Endothelial cell of umbilical vein (primary cell): ENCODE measurements at regions of chr12 and their contacts with region 1.

Region 1: GRCh38 chr12:98998697-98999299 is 353.7 kb downstream of the APAF1 start:
- DNase-seq: peak; percentile 49
- H3K4me3 ChIP-seq: no peak overlapping the region
- H3K27ac ChIP-seq: no peak overlapping the region
- H3K4me1 ChIP-seq: no peaks in the 10 kb centered on the region
- H3K27me3 ChIP-seq: peaks cover 0 to 2% of the 10 kb centered on the region in 2 experiments
- CTCF ChIP-seq: peak; percentile 37 to 45
- POLR2A ChIP-seq: no peak

Region 2: GRCh38 chr12:98483621-98484503 is 514.9 kb before region 1 on chr12:
- CTCF ChIA-PET with region 1: no interaction called
- POLR2A ChIA-PET with region 1: no interaction called
- dilution Hi-C with region 1: no loop called
- intact Hi-C with region 1: no loop called
- DNase-seq: no peak
- H3K4me3 ChIP-seq: no peak overlapping the region
- H3K27ac ChIP-seq: no peak overlapping the region
- H3K4me1 ChIP-seq: no peaks in the 10 kb centered on the region
- H3K27me3 ChIP-seq: no peaks in the 10 kb centered on the region
- CTCF ChIP-seq: no peak
- POLR2A ChIP-seq: no peak

Region 3: GRCh38 chr12:98544751-98545150 is 454.0 kb before region 1 on chr12:
- CTCF ChIA-PET with region 1: no interaction called
- POLR2A ChIA-PET with region 1: no interaction called
- dilution Hi-C with region 1: no loop called
- intact Hi-C with region 1: no loop called
- DNase-seq: no peak
- H3K4me3 ChIP-seq: no peak overlapping the region
- H3K27ac ChIP-seq: no peak overlapping the region
- H3K4me1 ChIP-seq: no peaks in the 10 kb centered on the region
- H3K27me3 ChIP-seq: no peaks in the 10 kb centered on the region
- CTCF ChIP-seq: no peak
- POLR2A ChIP-seq: no peak

Region 4: GRCh38 chr12:98561846-98562245 is 437.0 kb before region 1 on chr12:
- CTCF ChIA-PET with region 1: interaction called, 56 read pairs
- POLR2A ChIA-PET with region 1: no interaction called
- dilution Hi-C with region 1: no loop called
- intact Hi-C with region 1: loop called (anchors 1 kb)
- DNase-seq: no peak
- H3K4me3 ChIP-seq: no peak overlapping the region
- H3K27ac ChIP-seq: no peak overlapping the region
- H3K4me1 ChIP-seq: no peaks in the 10 kb centered on the region
- H3K27me3 ChIP-seq: no peaks in the 10 kb centered on the region
- CTCF ChIP-seq: no peak
- POLR2A ChIP-seq: no peak

Region 5: GRCh38 chr12:98698603-98699463 is 300.0 kb before region 1 on chr12:
- CTCF ChIA-PET with region 1: interaction called, 68 read pairs
- POLR2A ChIA-PET with region 1: no interaction called
- dilution Hi-C with region 1: no loop called
- intact Hi-C with region 1: loop called (anchors 1 kb)
- DNase-seq: peak; percentile 74
- H3K4me3 ChIP-seq: no peak overlapping the region
- H3K27ac ChIP-seq: no peak overlapping the region
- H3K4me1 ChIP-seq: peaks cover 2% of the 10 kb centered on the region
- H3K27me3 ChIP-seq: no peaks in the 10 kb centered on the region
- CTCF ChIP-seq: peak; percentile 44 to 71
- POLR2A ChIP-seq: no peak

Region 6: DNA sequence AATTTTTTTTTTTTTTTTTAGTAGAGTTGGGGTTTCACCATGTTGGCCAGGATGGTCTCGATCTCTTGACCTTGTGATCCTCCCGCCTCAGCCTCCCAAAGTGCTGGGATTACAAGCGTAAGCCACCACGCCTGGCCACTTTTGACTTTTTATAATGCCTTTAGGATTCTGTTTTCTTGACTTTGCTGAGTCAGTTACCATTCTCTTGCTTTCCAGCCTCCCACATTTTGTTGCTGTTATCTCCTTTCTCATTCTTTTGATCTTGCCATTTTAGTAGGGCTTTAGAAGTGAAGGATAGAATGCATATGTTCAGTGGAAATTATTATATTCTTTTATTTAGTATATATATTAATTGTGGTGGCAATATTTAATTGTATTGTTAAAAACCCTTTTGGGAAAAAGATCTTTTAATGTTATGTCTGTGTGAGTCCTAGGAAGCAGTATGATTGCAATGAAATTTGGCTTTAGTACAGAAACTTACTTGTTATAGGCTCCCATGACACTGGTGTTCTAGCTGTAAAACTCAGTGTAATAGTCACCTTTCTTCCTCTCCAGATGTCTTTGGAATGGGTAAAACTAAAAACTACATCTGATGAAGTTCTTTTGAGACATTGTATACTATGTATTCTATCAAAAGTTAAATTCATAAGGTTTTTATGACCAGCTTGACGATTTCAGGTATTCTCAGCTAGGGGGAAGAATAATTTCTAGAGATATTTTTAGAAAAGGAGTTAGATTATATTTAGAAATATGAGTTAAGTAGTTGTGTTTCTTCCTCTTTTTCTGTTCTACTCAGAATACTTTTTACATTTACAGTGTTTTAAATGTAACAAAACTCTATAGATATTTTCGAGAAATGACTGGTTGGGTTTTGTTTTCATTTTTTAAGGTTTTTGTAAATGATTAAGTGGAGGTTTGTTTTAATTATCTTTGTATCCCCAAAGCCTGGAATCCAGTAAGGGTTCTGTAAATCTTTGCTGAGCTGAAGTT is 279.0 kb before region 1 on chr12:
- CTCF ChIA-PET with region 1: interaction called, 64 read pairs
- POLR2A ChIA-PET with region 1: no interaction called
- dilution Hi-C with region 1: no loop called
- intact Hi-C with region 1: no loop called
- DNase-seq: no peak
- H3K4me3 ChIP-seq: no peak overlapping the region
- H3K27ac ChIP-seq: no peak overlapping the region
- H3K4me1 ChIP-seq: no peaks in the 10 kb centered on the region
- H3K27me3 ChIP-seq: no peaks in the 10 kb centered on the region
- CTCF ChIP-seq: no peak
- POLR2A ChIP-seq: no peak

Region 7: DNA sequence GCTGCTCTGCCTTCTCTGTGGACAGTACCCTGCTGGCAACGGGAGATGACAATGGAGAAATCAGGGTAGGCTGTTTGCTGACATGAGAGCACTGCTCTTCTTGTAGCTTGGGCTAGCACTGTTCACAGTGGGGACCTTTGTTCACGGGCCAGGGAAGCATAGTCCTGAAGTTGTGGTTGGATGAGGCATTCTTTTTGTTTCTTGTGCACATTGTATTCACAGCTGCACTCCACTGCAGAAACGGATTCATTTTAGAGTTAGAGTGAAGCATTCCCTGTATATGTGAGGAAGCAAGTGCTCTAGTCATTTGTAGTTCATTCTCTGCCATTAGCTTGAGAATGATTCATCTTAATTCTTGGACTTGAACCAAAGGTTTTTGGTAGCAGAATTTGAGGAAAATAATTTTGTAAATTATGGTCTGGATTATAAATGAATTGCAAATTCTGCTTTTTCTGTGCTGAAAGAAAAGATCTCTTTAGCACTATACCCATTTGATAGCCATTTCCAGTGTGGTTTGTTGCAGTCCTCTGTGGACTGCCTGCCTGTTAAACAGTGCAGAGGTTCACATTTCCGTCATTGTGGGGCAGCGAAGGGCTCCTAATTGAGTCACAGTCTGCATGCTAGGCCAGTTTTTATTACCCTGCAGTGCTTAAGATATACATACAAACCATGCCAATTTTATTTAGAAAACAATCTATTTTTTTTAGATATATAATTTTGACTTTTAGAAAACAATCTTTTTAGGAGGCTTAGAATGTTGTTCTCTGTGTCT is 273.1 kb before region 1 on chr12:
- CTCF ChIA-PET with region 1: interaction called, 64 read pairs
- POLR2A ChIA-PET with region 1: no interaction called
- dilution Hi-C with region 1: no loop called
- intact Hi-C with region 1: loop called (anchors 1 kb)
- DNase-seq: peak; percentile 51
- H3K4me3 ChIP-seq: no peak overlapping the region
- H3K27ac ChIP-seq: no peak overlapping the region
- H3K4me1 ChIP-seq: no peaks in the 10 kb centered on the region
- H3K27me3 ChIP-seq: no peaks in the 10 kb centered on the region
- CTCF ChIP-seq: peak; percentile 34 to 53
- POLR2A ChIP-seq: no peak

Region 8: DNA sequence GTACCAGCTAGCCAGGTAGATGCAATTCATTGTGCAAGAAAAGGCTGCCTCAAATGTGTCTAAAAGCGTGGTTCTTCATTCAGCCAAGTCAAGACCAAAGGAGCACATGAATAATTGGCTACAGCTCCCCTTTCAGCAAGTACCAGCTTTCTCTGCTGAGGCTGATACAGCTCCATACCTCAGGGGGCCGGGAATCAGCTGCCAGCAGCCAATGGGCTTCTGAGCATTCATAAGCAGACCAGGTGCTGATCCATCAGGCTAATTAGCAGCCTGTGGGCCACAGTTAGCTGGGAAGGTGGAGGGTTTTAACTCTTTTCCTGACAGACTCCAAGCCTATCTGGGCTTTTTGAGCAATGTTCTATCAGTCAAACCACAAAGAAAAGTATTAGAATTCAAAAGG is 89.0 kb before region 1 on chr12:
- CTCF ChIA-PET with region 1: no interaction called
- POLR2A ChIA-PET with region 1: no interaction called
- dilution Hi-C with region 1: no loop called
- intact Hi-C with region 1: no loop called
- DNase-seq: no peak
- H3K4me3 ChIP-seq: no peak overlapping the region
- H3K27ac ChIP-seq: no peak overlapping the region
- H3K4me1 ChIP-seq: no peaks in the 10 kb centered on the region
- H3K27me3 ChIP-seq: no peaks in the 10 kb centered on the region
- CTCF ChIP-seq: no peak
- POLR2A ChIP-seq: no peak

Region 9: DNA sequence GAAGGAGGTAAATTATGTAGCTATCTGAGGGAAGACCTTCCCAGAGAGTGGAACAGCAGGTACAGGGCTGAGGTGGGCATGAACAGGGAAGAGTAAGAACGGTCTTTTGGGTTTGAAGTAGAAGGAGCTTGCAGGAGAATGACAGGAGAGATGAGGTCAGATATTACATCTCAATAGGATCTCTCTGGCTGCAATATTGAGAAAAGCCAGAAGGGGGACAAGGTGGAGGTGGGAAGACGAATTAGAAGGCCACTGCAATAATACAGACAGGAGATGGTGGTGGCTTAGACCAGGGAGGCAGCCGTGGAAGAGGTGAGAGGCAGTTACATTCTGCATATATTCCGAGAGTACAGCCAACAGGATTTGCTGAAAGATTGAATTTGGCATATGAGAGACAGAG is 43.5 kb before region 1 on chr12:
- CTCF ChIA-PET with region 1: interaction called, 4 read pairs
- POLR2A ChIA-PET with region 1: no interaction called
- dilution Hi-C with region 1: no loop called
- intact Hi-C with region 1: loop called (anchors 2 kb)
- DNase-seq: peak; percentile 21
- H3K4me3 ChIP-seq: no peak overlapping the region
- H3K27ac ChIP-seq: no peak overlapping the region
- H3K4me1 ChIP-seq: no peaks in the 10 kb centered on the region
- H3K27me3 ChIP-seq: no peaks in the 10 kb centered on the region
- CTCF ChIP-seq: peak; percentile 16 to 33
- POLR2A ChIP-seq: no peak

Region 10: DNA sequence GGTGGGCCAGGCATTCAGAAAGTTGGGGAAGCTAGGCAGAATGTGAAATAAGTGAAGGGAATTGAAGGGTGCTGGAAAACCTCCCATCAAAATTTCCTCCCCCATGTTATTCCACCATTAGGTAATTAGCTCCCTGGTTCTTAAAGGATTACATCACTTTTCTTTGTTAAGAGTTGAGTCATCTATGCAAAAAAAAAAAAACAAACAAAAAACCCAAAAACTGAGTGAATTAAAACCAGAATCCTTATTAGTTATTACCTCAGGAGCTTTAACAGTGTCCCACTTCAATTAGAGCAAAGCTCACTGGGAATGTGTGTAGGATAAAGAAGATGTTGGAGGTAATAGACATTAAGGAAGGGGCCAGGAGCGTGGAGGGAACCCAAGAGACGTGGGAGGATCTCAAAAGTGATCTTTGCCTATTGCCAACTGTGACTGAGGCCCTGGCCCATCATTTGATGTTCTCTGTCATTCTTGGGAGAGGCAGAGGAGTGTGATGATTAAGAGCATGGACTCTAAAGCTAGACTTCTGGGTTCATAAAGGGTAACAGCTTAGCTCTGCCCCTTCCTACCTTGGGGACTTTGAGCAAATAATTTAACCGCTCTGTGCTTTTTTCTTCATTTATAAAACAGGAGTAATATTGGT is 11.0 kb after region 1 on chr12:
- CTCF ChIA-PET with region 1: interaction called, 15 read pairs
- POLR2A ChIA-PET with region 1: no interaction called
- dilution Hi-C with region 1: no loop called
- intact Hi-C with region 1: no loop called
- DNase-seq: no peak
- H3K4me3 ChIP-seq: no peak overlapping the region
- H3K27ac ChIP-seq: no peak overlapping the region
- H3K4me1 ChIP-seq: no peaks in the 10 kb centered on the region
- H3K27me3 ChIP-seq: no peaks in the 10 kb centered on the region
- CTCF ChIP-seq: no peak
- POLR2A ChIP-seq: no peak

Region 11: DNA sequence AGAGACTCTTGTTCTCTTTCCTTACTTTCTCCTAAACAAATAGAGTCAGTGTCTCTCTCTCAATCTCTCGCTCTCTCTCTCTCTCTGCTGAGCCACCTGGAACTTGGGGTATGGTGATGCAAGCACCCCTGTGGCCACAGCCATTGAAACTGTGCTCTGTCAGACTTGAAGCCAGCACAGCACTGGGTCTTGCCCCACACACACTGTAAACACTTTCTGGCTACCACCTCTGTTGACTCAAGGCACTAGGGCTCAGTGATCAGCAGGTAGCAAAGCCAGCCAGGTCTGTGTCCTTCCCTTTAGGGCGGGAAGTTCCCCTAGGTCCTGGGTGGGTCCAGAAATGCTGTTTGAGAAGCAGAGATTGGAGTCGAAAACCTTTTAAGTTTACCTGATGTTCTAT is 522.9 kb after region 1 on chr12:
- CTCF ChIA-PET with region 1: no interaction called
- POLR2A ChIA-PET with region 1: no interaction called
- dilution Hi-C with region 1: no loop called
- intact Hi-C with region 1: no loop called
- DNase-seq: no peak
- H3K4me3 ChIP-seq: no peak overlapping the region
- H3K27ac ChIP-seq: no peak overlapping the region
- H3K4me1 ChIP-seq: no peaks in the 10 kb centered on the region
- H3K27me3 ChIP-seq: no peaks in the 10 kb centered on the region
- CTCF ChIP-seq: no peak
- POLR2A ChIP-seq: no peak